IMR-90 (cell line): ENCODE measurements at regions of chr18 and their contacts with region 1.

Region 1: DNA sequence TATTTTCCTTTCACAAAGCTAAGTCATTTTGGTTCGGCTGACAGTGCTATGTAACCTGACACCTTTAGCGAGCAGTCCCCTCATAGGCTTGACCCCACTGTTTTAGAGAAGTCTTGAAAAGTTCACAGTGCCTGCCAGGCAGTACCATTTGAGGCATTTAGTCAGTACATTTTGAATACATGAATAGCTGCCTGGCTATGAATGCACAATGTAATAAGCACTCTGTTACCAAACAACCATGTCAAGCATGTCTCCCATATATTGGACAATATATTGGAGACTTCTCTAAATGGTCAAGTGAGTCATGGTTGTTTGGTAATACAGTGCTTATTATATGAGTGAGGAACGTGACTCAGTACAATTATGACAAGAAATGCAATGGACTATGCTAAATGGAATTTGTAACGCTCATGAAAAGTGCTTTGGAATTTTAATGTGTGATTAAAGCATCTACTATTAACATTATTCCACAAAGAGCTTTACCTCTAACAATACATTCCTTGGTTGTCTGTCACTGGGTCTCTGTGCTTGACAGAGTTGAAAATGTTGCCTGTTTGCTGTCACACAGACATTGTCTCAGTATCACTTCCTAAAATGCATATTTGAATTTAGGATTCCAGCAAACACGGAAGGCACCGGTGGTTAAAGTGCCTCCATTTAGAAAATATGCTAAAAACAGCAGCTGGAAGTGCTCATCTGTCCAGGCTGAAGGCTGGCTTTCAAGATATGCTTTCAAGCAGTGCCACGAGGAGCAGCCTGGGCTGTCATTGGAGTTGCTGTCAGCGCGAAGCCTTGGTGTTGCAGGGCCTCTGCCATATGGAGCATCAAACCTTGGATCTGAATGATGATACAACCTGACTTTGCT is 458.6 kb downstream of the FBXO15 start:
- DNase-seq: peak; percentile 98
- ATAC-seq: peak; percentile 77
- H3K4me3 ChIP-seq: no peak overlapping the region
- H3K27ac ChIP-seq: peak overlapping the region; percentile 96
- H3K4me1 ChIP-seq: peaks cover 34% of the 10 kb centered on the region
- H3K27me3 ChIP-seq: no peaks in the 10 kb centered on the region
- CTCF ChIP-seq: no peak
- POLR2A ChIP-seq: 0 out of 2 replicates have a peak, but pooled peaks have one; percentile 24
- RAD21 ChIP-seq: no peak; the same call in 1 of the 2 replicates

Region 2: GRCh38 chr18:73153271-73153670 is 535.8 kb before region 1 on chr18:
- CTCF ChIA-PET with region 1: no interaction called
- POLR2A ChIA-PET with region 1: no interaction called
- dilution Hi-C with region 1: no loop called
- in situ Hi-C with region 1: no loop called
- intact Hi-C with region 1: loop called (anchors 5 kb)
- DNase-seq: peak; percentile 3
- ATAC-seq: no peak; the same call in 1 of the 2 replicates
- H3K4me3 ChIP-seq: no peak overlapping the region
- H3K27ac ChIP-seq: no peak overlapping the region
- H3K4me1 ChIP-seq: no peaks in the 10 kb centered on the region
- H3K27me3 ChIP-seq: no peaks in the 10 kb centered on the region
- CTCF ChIP-seq: no peak
- POLR2A ChIP-seq: no peak
- RAD21 ChIP-seq: no peak

Region 3: DNA sequence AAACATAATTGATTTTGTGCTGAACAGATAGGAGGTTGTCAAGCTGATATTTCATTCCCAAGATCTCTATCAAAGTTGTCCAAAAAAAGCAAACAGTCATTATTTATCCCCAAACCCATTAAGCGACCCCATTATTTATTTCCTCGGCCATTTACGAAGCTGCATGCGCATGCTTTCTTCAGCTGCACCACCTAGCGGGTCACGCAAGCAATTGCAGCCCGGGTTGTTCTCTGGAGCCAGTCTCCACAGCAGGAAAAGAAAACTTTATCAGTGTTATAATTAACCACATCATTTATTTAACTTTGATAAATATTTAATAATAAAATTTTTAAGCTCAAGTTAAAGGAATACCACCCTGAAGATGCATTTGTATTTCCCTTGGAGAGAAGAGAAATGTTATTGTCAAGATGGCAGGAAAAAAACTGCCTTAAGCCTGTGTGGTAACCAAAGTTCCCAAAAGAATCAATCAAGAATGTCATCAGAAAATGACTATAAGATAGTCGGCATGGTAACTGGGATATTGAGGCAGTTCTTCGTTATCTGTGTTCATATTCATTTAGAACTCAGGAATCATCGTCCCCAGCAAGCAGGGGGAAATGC is 153.8 kb after region 1 on chr18:
- CTCF ChIA-PET with region 1: interaction called, 3 read pairs
- POLR2A ChIA-PET with region 1: no interaction called
- dilution Hi-C with region 1: no loop called
- in situ Hi-C with region 1: no loop called
- intact Hi-C with region 1: loop called (anchors 2 kb)
- DNase-seq: peak; percentile 65
- ATAC-seq: peak; percentile 91
- H3K4me3 ChIP-seq: no peak overlapping the region
- H3K27ac ChIP-seq: no peak overlapping the region
- H3K4me1 ChIP-seq: 0 out of 2 replicates have a peak, but pooled peaks cover 4% of the 10 kb centered on the region
- H3K27me3 ChIP-seq: no peaks in the 10 kb centered on the region
- CTCF ChIP-seq: peak; percentile 91
- POLR2A ChIP-seq: no peak
- RAD21 ChIP-seq: peak; percentile 88

Region 4: DNA sequence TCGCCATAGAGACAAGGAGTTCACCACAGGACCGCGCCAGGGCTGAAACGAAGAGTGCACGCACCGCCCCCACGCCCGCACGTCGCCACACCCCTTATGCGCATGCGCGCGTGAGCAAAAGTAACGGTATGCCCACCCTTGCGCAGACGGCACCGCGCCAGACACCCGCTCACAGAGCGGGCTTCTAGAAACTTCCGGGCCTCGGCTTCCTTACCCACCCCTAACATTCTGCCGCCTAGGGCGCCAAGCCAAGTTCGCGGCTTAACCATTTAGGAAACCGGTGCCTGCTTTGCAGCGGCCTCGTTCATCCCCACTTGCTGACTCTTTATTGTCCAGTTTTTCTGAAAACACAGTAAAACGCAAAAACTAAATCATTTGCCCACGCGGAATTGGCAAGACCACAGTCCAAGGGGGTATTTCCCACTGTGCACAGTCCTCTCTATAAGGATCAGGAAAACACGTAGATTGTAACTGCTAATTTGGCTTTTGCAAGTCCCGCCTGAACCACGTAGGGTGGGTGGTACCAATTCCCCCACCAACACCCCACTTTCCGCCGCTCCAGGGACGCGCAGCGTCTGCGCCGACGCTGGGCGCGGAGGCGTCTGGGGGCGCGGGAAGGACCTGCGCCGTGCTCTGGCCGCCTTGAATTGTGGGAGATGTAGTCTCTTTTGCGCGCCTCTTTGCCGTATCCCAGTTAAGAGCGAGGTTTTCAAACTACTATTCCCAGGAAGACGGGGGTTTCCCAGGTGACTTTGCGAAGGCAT is 458.9 kb after region 1 on chr18 and contains the starts of genes FBXO15 and TIMM21:
- CTCF ChIA-PET with region 1: no interaction called
- POLR2A ChIA-PET with region 1: no interaction called
- dilution Hi-C with region 1: no loop called
- in situ Hi-C with region 1: no loop called
- intact Hi-C with region 1: loop called (anchors 10 kb)
- DNase-seq: peak; percentile 96
- ATAC-seq: peak; percentile 91
- H3K4me3 ChIP-seq: peak within 1 kb of the TSS; percentile 91
- H3K27ac ChIP-seq: peak within 1 kb of the TSS; percentile 99
- H3K4me1 ChIP-seq: peaks cover 8% of the 10 kb centered on the region
- H3K27me3 ChIP-seq: no peaks in the 10 kb centered on the region
- CTCF ChIP-seq: 0 out of 2 replicates have a peak, but pooled peaks have one; percentile 0
- POLR2A ChIP-seq: peak; percentile 5; the same call in 1 of the 2 replicates
- RAD21 ChIP-seq: no peak
- total RNA-seq, gene FBXO15: 0.90 and 1.1 TPM in 2 replicates
- total RNA-seq, gene TIMM21: 41.9 and 42.8 TPM in 2 replicates